Dendritic cell treated with granulocyte-macrophage colony-stimulating factor and Interleukin-4, amounts not matched to agents 40 ng/mL and 50 ng/mL, for 4 days (primary cell): ENCODE measurements at regions of chr2 and their contacts with region 1.

Region 1: DNA sequence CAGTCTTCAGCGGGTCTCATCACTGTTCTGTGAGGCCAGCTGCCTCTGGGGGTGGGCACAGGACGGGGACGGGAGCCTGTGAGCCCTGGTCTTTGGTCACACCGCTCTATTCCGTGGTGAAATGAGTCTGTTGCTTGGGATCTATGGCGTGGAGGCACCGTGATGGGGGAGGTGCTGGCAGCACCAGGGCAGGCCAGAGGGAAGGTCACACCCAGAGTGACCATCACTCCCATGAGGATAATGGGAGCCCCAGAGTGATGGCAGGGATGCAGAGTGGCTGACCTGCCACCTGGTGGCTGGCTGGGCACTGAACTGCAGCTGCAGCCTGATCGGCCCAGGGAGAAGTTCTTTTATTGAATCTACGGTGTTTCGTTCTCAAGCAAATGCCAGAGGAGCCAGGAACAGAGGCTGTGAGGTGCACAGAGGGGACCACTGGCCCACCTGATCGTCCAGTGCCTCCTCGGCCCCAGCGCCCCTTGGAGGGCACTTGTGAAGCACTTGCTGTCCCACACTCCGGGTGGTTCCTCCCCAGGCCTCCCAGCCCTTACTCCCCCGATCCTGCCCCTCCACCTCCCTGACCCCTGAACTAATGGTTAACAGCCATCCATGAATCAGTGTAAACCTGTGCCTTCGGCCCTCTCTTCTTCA is 17.9 kb downstream of the KCNIP3 start:
- H3K4me3 Mint-ChIP-seq: no peak overlapping the region
- H3K27ac Mint-ChIP-seq: no peak overlapping the region
- H3K4me1 Mint-ChIP-seq: peaks cover 9% of the 10 kb centered on the region
- H3K27me3 Mint-ChIP-seq: no peaks in the 10 kb centered on the region

Region 2: DNA sequence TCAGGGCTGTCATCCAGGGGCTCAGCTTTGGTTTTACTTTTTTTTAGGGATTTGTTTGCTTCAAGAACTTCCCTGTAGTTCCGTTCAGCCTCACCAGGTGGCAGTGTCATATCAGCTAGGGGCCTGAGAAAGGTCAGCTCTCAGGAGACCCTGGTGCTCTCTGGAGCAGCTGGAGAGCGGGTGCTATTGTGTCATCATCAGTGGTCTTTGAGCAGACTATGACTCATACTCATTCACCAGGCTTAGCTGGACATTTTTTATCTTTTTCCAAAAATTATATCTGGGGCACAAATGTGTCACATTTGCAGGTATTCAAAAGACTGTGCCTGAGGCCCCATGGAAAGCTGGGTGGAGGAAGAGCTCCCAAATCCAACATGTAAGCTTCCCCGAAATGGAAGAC is 83.4 kb before region 1 on chr2:
- intact Hi-C with region 1: loop called (anchors 1 kb)
- H3K4me3 Mint-ChIP-seq: no peak overlapping the region
- H3K27ac Mint-ChIP-seq: no peak overlapping the region
- H3K4me1 Mint-ChIP-seq: peaks cover 5% of the 10 kb centered on the region
- H3K27me3 Mint-ChIP-seq: no peaks in the 10 kb centered on the region

Region 3: DNA sequence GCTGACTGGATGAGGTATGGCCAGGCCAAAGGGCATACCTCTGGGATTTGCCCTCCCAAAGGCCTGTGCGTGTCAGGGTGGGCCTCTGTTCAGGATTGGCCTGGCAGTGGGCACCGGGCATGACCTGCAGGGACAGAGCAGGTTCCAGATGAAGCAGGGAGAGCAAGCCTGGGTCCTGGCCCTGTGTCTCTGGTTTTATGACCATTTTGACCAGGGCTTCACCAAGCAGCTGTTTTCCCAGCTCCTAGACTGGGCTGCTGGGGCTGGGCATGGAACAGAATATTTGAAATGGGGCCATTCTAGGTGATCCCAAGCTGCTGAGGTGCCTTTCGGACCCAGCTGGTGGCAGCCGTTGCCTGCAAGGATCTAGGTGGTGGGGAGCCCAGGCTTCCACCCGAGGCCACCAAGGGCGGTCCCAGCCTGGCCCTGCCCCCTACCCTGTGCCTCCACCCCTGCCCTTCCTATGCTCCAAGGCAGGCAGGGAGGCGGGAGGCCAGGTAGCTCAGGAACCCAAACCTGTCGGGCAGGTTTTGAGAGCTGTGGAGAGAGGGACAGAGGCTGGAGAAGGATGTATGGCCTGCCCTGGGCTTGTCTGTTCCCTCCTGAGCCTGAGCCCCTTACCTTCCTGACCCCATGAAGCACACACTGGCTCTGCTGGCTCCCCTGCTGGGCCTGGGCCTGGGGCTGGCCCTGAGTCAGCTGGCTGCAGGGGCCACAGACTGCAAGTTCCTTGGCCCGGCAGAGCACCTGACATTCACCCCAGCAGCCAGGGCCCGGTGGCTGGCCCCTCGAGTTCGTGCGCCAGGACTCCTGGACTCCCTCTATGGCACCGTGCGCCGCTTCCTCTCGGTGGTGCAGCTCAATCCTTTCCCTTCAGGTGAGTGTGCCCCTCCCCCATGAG is 40.9 kb before region 1 on chr2 and contains the start of gene PROM2:
- intact Hi-C with region 1: no loop called
- H3K4me3 Mint-ChIP-seq: no peak within 1 kb of the TSS
- H3K27ac Mint-ChIP-seq: no peak within 1 kb of the TSS
- H3K4me1 Mint-ChIP-seq: peaks cover 15% of the 10 kb centered on the region
- H3K27me3 Mint-ChIP-seq: peaks cover 6% of the 10 kb centered on the region

Region 4: DNA sequence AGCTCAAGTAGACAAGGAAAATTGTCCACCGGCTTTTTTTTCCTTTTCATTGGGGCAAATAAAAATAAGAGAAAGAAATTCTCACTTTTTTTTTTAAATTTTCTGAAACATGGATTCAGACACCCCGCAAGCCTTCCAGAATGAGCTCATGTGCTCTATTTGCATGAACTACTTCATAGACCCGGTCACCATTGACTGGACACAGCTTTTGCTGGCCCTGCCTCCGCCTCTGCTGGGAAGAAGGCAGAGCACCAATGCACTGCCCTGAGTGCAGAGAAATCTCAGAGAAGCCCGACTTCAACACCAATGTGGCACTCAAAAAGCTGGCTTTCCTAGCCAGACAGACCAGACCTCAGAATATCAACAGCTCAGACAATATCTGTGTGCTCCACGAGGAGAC is 199.6 kb after region 1 on chr2:
- intact Hi-C with region 1: no loop called
- H3K4me3 Mint-ChIP-seq: no peak overlapping the region
- H3K27ac Mint-ChIP-seq: no peak overlapping the region
- H3K4me1 Mint-ChIP-seq: no peaks in the 10 kb centered on the region
- H3K27me3 Mint-ChIP-seq: peaks cover 2% of the 10 kb centered on the region